Head of caudate nucleus (tissue), 42 donors: ENCODE measurements at regions of chr18 and their contacts with region 1.

Region 1: DNA sequence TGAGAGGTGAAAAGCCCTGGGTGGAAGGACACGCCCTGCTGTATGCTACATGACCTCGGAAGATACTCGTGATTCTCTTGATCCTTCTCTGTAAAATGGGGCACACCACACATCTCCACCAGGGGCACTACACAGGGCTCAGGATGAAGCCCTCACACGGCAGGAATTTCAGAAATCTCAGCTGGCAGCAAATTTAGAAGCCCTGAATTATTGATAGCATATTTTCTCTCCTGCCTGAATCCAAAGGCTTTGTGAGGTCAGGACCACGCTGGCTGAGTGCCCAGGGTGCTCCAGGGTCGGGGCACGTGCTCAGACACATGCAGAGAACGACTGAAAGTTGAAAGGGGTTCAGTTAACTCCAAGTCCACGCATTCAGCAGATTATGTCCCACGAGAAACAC is 42.1 kb upstream of the GALR1 start:
- DNase-seq: peak in 32 of 42 donors; percentile 10 to 72 (median 40)

Region 2: DNA sequence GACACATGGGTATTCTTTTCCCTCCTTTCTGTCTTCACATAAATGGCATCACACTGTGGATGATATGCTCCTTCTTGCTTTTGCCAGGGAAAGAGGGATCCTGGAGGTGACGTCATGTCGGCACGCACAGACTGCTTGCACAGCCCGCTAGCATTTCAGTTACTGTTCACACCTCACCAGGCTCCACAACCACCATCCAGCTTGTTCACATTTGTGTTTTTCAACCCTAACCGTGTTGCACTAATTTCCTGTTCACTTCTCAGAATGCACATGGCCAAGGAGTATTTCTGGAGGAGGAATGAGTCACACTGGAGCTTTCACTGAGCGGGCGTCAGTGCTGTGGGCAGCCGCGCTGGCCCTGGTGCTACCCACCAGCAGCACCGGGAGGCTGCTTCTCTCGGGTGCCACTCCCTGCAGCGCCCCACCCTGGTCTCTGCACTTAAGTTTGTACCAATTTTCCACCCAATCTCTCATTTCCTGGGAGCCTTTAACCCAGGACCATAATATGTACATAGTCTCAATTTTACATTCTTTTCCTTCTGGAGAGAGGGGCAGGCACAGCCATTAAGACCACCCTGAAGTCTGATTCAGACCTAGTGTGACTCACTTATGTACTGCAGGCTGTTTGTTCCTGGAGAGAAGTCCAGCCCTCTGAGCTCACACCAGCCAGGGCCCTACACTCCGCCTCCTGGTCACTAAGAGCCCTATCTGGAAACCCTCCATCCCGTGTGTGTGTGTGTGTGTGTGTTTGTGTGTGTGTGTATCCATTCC is 140.1 kb before region 1 on chr18:
- intact Hi-C with region 1: loop called (anchors 10 kb)
- DNase-seq: peak in 5 of 42 donors; percentile 35 to 65 (median 55)

Region 3: GRCh38 chr18:77304268-77304667 is 96.7 kb after region 1 on chr18:
- intact Hi-C with region 1: no loop called
- DNase-seq: no peak